Common myeloid progenitor, CD34-positive (primary cell): ENCODE measurements at regions of chr9 and their contacts with region 1.

Region 1: GRCh38 chr9:77922591-77922990 is 109.0 kb downstream of the GNAQ start:
- DNase-seq: no peak
- H3K4me3 ChIP-seq: no peak overlapping the region
- H3K27ac ChIP-seq: no peak overlapping the region
- H3K4me1 ChIP-seq: peaks cover 6 to 33% (median 23%) of the 10 kb centered on the region in 4 experiments
- H3K27me3 ChIP-seq: no peaks in the 10 kb centered on the region

Region 2: DNA sequence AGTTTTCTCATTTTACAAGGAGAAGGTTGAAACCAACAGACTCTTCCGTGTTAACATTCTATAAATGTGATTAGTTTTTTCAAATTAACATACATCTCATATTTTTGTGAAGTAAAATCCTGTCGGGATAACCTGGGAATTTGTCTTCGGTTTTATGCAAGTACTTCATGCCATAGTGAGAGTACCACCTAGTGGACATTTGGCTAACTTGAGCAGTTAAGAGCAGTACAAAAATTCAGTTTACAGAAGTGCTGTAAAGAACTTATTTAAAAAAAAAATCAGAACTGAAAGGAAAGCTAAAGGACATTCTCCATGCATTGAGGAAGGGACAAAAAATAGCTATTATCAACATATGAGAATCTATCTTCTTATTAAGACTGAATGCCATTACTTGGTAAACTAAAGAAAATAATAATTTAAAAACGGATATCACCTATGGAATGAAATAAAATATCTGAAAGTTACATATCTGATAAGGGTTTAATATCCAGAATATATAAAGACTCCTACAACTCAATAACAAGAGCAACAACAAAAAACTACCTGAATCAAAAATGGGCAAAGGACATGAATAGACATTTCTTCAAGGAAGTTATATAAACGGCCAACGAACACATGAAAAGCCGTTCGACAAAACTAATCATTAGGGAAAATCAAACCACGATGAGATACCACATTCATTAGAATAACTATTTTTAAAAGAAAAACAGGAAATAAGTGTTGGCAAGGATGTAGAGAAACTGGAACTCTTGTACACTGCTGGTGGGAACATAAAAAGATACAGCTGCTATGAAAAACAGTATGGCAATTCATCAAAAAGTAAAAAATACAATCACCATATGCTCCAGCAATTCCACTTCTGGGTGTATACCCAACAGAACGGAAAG is 157.5 kb before region 1 on chr9:
- CTCF ChIA-PET with region 1: no interaction called
- POLR2A ChIA-PET with region 1: no interaction called
- DNase-seq: peak; percentile 27 to 63 (median 59)
- H3K4me3 ChIP-seq: no peak overlapping the region
- H3K27ac ChIP-seq: no peak overlapping the region
- H3K4me1 ChIP-seq: peaks cover 0 to 10% (median 8%) of the 10 kb centered on the region in 4 experiments
- H3K27me3 ChIP-seq: no peaks in the 10 kb centered on the region

Region 3: DNA sequence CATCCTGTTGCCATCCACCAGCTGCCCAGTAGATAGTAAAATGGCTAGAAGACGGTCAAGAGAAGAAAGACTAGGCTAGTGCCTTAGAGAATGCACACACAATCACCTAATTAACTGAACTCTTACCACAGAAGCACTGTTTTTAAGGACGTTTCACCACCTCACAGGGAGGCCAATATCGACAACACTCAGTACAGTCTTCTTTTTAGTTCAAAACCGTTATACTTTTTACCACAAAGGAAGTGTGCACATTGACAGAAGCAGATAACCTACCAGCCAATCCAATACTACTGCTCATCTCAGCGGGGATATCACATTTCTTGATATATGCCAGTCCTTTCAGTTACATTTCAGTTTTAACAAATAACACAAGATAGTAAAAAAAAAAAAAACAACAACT is 13.3 kb before region 1 on chr9:
- CTCF ChIA-PET with region 1: interaction called, 10 read pairs
- POLR2A ChIA-PET with region 1: no interaction called
- DNase-seq: peak; percentile 91 to 98 (median 95)
- H3K4me3 ChIP-seq: peak overlapping the region in 3 of 7 experiments; percentile 22 to 43 (median 37)
- H3K27ac ChIP-seq: peak overlapping the region; percentile 85 to 95
- H3K4me1 ChIP-seq: peaks cover 60 to 90% (median 73%) of the 10 kb centered on the region in 4 experiments
- H3K27me3 ChIP-seq: no peaks in the 10 kb centered on the region